Activated CD4-positive, alpha-beta T cell treated with anti-CD3 and anti-CD28 coated beads for 36 hours (primary cell): ENCODE measurements at regions of chr7 and their contacts with region 1.

Region 1: DNA sequence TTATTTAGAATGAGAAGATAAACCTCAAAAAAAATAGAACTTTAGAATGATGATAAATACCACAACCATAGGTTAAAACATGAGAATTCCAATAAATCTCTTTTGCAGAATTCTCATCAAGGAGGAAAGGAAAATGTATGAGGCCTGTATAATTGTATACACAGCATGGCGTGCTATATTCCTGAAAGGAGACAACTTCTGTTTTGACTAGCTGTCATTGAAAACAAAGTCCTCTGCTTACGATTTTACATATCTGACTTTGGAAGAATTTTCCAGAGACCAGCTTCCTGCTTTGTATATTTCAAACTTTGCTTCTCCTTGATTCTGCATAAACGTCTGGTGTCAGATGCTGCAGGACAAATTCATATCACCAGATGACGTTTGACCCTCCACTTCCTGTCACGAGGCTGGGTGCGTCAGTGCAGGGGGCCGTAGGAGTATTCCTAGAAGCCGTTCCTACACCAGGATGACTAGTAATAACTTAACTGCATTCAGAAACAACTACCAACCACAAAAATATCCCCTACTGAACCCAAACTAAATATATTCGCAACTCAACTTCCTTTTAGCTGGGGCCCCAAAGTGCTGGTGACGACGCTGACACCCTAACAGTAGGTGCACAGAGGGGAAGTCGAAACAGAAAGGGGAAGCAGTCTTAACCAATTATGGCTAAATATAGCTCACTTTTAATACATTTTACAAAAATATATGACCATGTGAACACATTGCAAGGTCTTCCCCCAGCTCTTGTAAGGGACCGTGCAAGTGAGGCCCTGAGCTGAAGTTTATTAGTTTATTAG is 178.6 kb upstream of the INHBA start:
- DNase-seq: peak; percentile 90
- ATAC-seq: peak; percentile 95
- H3K4me3 Mint-ChIP-seq: peak overlapping the region; percentile 30
- H3K27ac Mint-ChIP-seq: peak overlapping the region; percentile 93
- H3K4me1 Mint-ChIP-seq: peaks cover 49% of the 10 kb centered on the region
- H3K27me3 Mint-ChIP-seq: peaks cover 4% of the 10 kb centered on the region

Region 2: GRCh38 chr7:40437498-40437897 is 1444.0 kb before region 1 on chr7:
- CTCF ChIA-PET with region 1: no interaction called
- POLR2A ChIA-PET with region 1: no interaction called
- intact Hi-C with region 1: no loop called
- DNase-seq: no peak
- ATAC-seq: no peak
- H3K4me3 Mint-ChIP-seq: no peak overlapping the region
- H3K27ac Mint-ChIP-seq: no peak overlapping the region
- H3K4me1 Mint-ChIP-seq: no peaks in the 10 kb centered on the region
- H3K27me3 Mint-ChIP-seq: no peaks in the 10 kb centered on the region

Region 3: GRCh38 chr7:41385996-41386395 is 495.5 kb before region 1 on chr7:
- CTCF ChIA-PET with region 1: no interaction called
- POLR2A ChIA-PET with region 1: no interaction called
- intact Hi-C with region 1: no loop called
- DNase-seq: no peak
- ATAC-seq: no peak
- H3K4me3 Mint-ChIP-seq: no peak overlapping the region
- H3K27ac Mint-ChIP-seq: no peak overlapping the region
- H3K4me1 Mint-ChIP-seq: no peaks in the 10 kb centered on the region
- H3K27me3 Mint-ChIP-seq: no peaks in the 10 kb centered on the region

Region 4: GRCh38 chr7:41628901-41629300 is 252.6 kb before region 1 on chr7:
- CTCF ChIA-PET with region 1: no interaction called
- POLR2A ChIA-PET with region 1: no interaction called
- intact Hi-C with region 1: loop called (anchors 2 to 5 kb)
- DNase-seq: peak; percentile 9
- ATAC-seq: peak; percentile 79
- H3K4me3 Mint-ChIP-seq: no peak overlapping the region
- H3K27ac Mint-ChIP-seq: no peak overlapping the region
- H3K4me1 Mint-ChIP-seq: peaks cover 22% of the 10 kb centered on the region
- H3K27me3 Mint-ChIP-seq: peaks cover 8% of the 10 kb centered on the region

Region 5: DNA sequence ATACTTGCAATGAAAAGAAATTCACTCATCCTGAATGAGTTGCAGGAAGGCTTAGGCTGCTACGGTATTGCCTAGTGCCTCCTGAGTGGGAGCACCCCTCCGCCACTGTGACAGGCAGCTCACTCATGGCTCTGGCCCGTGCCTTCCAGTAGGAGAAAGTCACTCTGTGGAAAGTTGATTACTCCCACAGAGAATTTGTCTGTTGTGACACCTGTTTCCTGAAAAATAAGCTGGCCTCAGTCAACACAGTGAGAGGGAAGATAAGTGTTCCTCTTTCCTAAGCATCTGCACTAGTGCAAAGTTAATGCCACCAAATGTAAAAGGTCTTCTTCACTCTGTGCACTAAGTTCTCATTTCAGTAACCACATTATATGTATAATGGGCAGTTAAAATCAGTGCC is 19.9 kb before region 1 on chr7:
- CTCF ChIA-PET with region 1: no interaction called
- POLR2A ChIA-PET with region 1: no interaction called
- intact Hi-C with region 1: loop called in 1 of 2 experiments (anchors 1 kb)
- DNase-seq: no peak
- ATAC-seq: no peak
- H3K4me3 Mint-ChIP-seq: no peak overlapping the region
- H3K27ac Mint-ChIP-seq: no peak overlapping the region
- H3K4me1 Mint-ChIP-seq: no peaks in the 10 kb centered on the region
- H3K27me3 Mint-ChIP-seq: peaks cover 25% of the 10 kb centered on the region

Region 6: DNA sequence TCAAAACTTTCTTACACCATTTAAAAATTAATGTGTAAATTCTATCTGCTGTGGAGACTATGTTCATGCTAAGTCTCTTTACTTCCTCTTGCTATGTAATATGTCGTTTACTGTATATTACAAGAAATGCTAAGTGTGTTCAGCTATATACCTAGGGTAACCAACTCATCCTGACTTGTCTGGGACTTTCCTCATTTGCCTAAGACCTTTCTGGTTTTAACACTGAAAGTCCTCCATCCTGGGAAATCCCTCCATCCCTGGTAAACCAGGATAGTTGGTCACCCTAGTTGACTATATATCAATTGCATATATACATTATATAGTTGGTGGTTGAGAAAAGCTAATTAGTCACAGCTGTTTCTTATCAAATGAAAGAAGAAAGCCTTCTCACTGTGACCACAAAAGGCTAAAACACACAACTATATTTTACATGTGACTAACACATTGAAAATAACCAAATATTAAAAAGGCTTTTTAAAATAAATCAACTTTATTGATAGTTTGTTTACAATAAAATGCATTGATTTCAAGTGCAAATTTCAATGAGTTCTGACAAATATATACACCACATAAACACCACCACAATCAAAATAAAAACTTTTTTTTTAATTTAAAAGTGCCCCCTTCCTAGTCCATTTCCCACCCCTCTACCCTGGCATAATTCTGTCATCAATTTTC is 10.9 kb before region 1 on chr7:
- CTCF ChIA-PET with region 1: interaction called, 7 read pairs
- POLR2A ChIA-PET with region 1: no interaction called
- intact Hi-C with region 1: loop called (anchors 1 kb)
- DNase-seq: no peak
- ATAC-seq: peak; percentile 77
- H3K4me3 Mint-ChIP-seq: no peak overlapping the region
- H3K27ac Mint-ChIP-seq: no peak overlapping the region
- H3K4me1 Mint-ChIP-seq: peaks cover 16% of the 10 kb centered on the region
- H3K27me3 Mint-ChIP-seq: peaks cover 44% of the 10 kb centered on the region

Region 7: GRCh38 chr7:42869131-42870020 is 987.8 kb after region 1 on chr7:
- CTCF ChIA-PET with region 1: no interaction called
- POLR2A ChIA-PET with region 1: interaction called, 3 read pairs
- intact Hi-C with region 1: loop called in 1 of 2 experiments (anchors 5 kb)
- DNase-seq: peak; percentile 76
- ATAC-seq: peak; percentile 96
- H3K4me3 Mint-ChIP-seq: peak overlapping the region; percentile 1
- H3K27ac Mint-ChIP-seq: peak overlapping the region; percentile 53
- H3K4me1 Mint-ChIP-seq: peaks cover 20% of the 10 kb centered on the region
- H3K27me3 Mint-ChIP-seq: peaks cover 17% of the 10 kb centered on the region

Region 8: DNA sequence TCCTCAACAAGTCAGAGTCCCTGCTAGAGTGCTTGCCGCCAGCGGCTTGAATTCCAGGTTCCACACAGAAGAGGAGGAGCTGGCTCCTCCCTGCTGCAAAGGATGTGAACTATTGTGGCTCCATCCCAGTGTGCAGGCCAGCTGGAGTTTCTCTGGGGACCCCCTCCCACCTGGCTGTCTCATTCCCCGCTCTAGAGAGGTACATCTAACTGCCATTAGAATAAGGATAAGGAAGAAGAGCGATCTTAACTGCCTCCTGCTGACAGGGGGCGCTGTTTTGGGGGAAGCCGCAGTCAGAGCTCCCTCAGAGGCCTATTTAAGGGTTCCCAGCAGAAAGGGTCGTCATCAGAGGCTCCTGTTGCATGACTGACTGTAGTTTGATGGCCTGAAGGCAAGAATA is 1190.1 kb after region 1 on chr7:
- CTCF ChIA-PET with region 1: no interaction called
- POLR2A ChIA-PET with region 1: no interaction called
- intact Hi-C with region 1: loop called in 1 of 2 experiments (anchors 5 kb)
- DNase-seq: peak; percentile 63
- ATAC-seq: peak; percentile 36
- H3K4me3 Mint-ChIP-seq: no peak overlapping the region
- H3K27ac Mint-ChIP-seq: no peak overlapping the region
- H3K4me1 Mint-ChIP-seq: peaks cover 8% of the 10 kb centered on the region
- H3K27me3 Mint-ChIP-seq: peaks cover 20% of the 10 kb centered on the region

Region 9: GRCh38 chr7:43314379-43315189 is 1433.1 kb after region 1 on chr7:
- CTCF ChIA-PET with region 1: no interaction called
- POLR2A ChIA-PET with region 1: no interaction called
- intact Hi-C with region 1: loop called in 1 of 2 experiments (anchors 10 kb)
- DNase-seq: peak; percentile 65
- ATAC-seq: peak; percentile 88
- H3K4me3 Mint-ChIP-seq: peak overlapping the region; percentile 8
- H3K27ac Mint-ChIP-seq: no peak overlapping the region
- H3K4me1 Mint-ChIP-seq: peaks cover 17% of the 10 kb centered on the region
- H3K27me3 Mint-ChIP-seq: peaks cover 8% of the 10 kb centered on the region